Head of caudate nucleus (tissue), 42 donors: ENCODE measurements at regions of chr13 and their contacts with region 1.

Region 1: DNA sequence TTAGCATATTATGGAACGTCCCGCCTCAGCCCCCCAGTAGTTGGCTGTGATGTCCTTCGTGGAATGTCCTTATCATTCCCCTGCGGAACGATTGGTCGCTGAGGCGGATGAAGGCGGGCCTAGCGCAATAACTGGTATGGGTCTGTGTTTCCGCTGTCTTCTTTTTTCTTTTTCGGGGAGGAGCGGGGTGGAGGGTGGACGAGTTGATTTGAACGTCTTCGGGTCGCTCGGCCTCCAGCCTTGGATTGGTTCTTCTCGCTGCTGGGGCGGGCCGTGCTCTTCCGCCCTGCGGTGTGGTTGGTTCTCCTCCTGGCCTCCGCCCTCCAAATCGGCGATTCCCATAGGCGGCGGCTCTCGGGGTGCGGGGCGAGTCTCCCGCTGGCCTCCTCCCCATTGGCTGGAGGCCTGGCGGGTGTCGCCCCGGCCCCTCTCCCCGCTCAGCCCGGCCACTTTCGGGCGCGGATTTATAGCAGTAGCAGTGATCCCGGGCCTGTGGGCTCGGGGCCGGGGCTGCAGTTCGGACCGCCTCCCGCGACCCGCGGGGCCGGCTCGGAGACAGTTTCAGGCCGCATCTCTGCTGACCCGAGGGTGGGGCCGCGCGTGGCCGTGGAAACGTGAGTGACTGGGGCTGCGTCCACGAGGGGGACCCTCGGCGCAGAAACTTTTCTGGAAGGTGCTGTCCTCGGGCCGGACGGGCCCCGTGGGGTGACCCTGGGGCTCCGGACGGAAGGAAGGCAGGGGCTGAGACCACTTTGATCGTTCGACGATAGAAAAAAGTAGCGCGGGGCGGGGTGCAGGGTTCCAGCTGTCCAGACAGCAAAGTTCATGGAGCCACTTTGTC is 2.1 kb downstream of the ING1 start:
- DNase-seq: peak; percentile 91 to 100 (median 99)

Region 2: GRCh38 chr13:110615322-110616102 is 100.1 kb before region 1 on chr13 and contains the start of gene NAXD:
- intact Hi-C with region 1: loop called (anchors 5 kb)
- DNase-seq: peak; percentile 92 to 98 (median 96)

Region 3: GRCh38 chr13:110819203-110820014 is 103.8 kb after region 1 on chr13:
- intact Hi-C with region 1: loop called (anchors 10 kb)
- DNase-seq: peak; percentile 54 to 93 (median 82)